ENCODE measurements at regions of chr17 and their contacts with region 1.

Region 1: GRCh38 chr17:77096570-77097214 is 44.1 kb upstream of the SEC14L1 start:
- DNase-seq: peak in 3 of 5 donors; percentile 33 to 51 (median 49)
- ATAC-seq: peak; percentile 14 to 76 (median 64)
- H3K4me3 ChIP-seq: peak overlapping the region in 2 of 12 donors; percentile 1 to 7
- H3K27ac ChIP-seq: peak overlapping the region; percentile 42 to 96 (median 75)
- H3K4me1 ChIP-seq: peaks cover 0 to 45% (median 36%) of the 10 kb centered on the region in 12 donors
- H3K27me3 ChIP-seq: no peaks in the 10 kb centered on the region
- CTCF ChIP-seq: peak; percentile 54 to 86 (median 78)
- POLR2A ChIP-seq: no peak

Region 2: GRCh38 chr17:77127735-77128361 is 31.2 kb after region 1 on chr17:
- intact Hi-C with region 1: loop called in 1 of 10 experiments (anchors 2 kb)
- DNase-seq: peak; percentile 80 to 86 (median 82)
- ATAC-seq: peak; percentile 65 to 83 (median 78)
- H3K4me3 ChIP-seq: peak overlapping the region in 9 of 12 donors; percentile 16 to 45 (median 39)
- H3K27ac ChIP-seq: peak overlapping the region; percentile 76 to 96 (median 87)
- H3K4me1 ChIP-seq: peaks cover 0 to 88% (median 40%) of the 10 kb centered on the region in 12 donors
- H3K27me3 ChIP-seq: no peaks in the 10 kb centered on the region
- CTCF ChIP-seq: no peak
- POLR2A ChIP-seq: peak in 1 of 2 donors; percentile 84

Region 3: DNA sequence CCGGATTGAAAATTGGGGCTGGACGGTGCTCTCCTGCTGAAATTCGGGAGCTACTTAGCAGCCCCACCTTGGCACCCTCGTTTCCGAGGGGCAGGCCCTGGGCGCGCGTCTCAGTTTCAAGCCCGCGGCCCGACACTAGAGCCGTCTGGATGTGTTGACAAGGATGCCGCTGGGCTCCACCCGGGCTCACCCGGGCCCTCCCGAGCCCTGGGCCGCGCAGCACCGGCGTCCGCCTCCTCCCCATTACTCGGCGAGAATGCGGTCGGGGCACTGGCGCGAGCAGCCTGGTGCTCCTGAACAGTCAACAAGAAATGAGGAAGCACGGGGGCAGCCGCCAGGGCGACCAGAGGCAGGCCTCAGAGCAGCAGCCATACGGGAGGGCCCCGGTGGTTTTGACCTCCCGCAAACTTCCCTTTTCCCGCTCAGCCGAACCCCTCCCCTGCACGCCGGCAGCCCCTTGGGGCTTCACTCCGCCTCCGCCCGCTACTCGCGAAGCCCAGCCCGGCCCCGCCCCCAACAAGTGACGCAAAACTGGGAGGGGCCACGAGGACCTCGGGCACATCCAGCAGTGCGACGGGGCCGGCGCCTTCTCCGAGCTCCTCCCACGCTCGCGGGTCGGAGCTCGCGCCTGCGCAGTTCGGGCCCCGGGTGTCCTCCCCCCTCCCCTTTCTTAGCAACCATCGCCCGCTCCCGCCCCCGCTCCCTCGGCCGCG is 43.6 kb after region 1 on chr17:
- intact Hi-C with region 1: loop called (anchors 2 to 10 kb)
- DNase-seq: peak; percentile 99 to 100 (median 100)
- ATAC-seq: peak; percentile 98
- H3K4me3 ChIP-seq: peak overlapping the region; percentile 12 to 95 (median 76)
- H3K27ac ChIP-seq: peak overlapping the region; percentile 80 to 98 (median 94)
- H3K4me1 ChIP-seq: peaks cover 0 to 54% (median 11%) of the 10 kb centered on the region in 12 donors
- H3K27me3 ChIP-seq: no peaks in the 10 kb centered on the region
- CTCF ChIP-seq: peak in 1 of 12 donors; percentile 27
- POLR2A ChIP-seq: peak; percentile 86 to 97

Region 4: DNA sequence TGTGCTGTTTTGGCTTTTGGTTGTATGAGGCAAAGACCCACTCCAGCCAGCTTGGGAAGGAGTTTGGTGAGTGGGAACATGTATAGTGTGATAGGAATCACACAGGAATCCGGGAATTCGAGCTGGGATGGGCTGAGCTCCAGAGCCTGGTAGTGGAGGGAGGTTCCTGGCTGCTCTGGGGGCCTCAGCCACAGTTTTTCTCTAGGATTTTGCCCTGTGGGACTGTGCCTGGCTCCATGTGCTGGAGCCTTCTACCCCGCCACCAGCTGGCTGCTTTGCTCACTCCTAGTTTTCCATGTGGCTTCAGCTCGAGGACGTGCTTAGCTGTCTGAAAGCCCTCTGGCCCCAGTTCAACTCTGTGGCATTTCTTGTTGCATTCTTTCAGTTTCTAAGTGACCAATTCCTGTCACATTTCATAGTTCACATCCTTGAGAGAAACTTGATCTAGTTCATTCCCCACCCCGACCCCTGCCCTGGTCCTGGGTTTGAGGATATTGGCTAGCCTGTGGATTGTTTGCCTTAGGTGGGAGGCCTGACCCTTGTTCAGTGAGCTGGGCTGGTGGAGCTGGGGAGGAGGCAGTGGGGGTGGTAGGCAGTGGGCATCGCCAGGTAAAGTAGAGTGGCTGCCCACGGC is 49.0 kb after region 1 on chr17:
- intact Hi-C with region 1: loop called (anchors 2 to 10 kb)
- DNase-seq: peak; percentile 68 to 78 (median 72)
- ATAC-seq: peak; percentile 32 to 68 (median 55)
- H3K4me3 ChIP-seq: peak overlapping the region in 10 of 12 donors; percentile 10 to 95 (median 71)
- H3K27ac ChIP-seq: peak overlapping the region; percentile 31 to 98 (median 88)
- H3K4me1 ChIP-seq: peaks cover 3 to 80% (median 38%) of the 10 kb centered on the region in 12 donors
- H3K27me3 ChIP-seq: no peaks in the 10 kb centered on the region
- CTCF ChIP-seq: peak in 9 of 12 donors; percentile 17 to 54 (median 26)
- POLR2A ChIP-seq: no peak

Region 5: GRCh38 chr17:77208217-77208808 is 111.6 kb after region 1 on chr17:
- intact Hi-C with region 1: loop called in 9 of 10 experiments (anchors 2 to 10 kb)
- DNase-seq: peak in 4 of 5 donors; percentile 56 to 63 (median 58)
- ATAC-seq: peak; percentile 34 to 82 (median 72)
- H3K4me3 ChIP-seq: no peak overlapping the region
- H3K27ac ChIP-seq: peak overlapping the region; percentile 21 to 72 (median 55)
- H3K4me1 ChIP-seq: peaks cover 4 to 70% (median 35%) of the 10 kb centered on the region in 12 donors
- H3K27me3 ChIP-seq: no peaks in the 10 kb centered on the region
- CTCF ChIP-seq: peak in 10 of 12 donors; percentile 17 to 60 (median 35)
- POLR2A ChIP-seq: no peak

Region 6: DNA sequence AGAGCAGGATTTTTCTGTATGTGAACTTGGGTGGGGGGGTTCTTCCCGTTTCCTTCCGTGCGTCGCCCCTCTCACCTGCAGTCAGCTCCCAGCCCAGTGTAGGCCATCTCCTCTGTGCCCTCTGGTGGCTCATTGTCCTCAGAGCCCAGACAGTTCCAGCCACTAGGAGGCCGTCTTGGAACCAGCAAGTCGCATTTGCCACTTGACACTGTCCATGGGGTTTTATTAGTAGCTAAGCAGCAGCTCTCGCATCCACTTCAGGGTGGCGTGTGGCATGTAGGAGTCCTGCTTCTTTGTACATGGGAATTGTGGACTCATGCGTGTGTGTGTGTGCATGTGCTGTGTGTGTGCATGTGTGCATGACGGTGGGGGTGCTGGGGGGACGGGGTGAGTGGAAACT is 118.1 kb after region 1 on chr17:
- intact Hi-C with region 1: loop called in 9 of 10 experiments (anchors 2 to 10 kb)
- DNase-seq: peak in 3 of 5 donors; percentile 57 to 69 (median 58)
- ATAC-seq: peak in 3 of 4 donors; percentile 69 to 75 (median 72)
- H3K4me3 ChIP-seq: no peak overlapping the region
- H3K27ac ChIP-seq: peak overlapping the region in 1 of 12 donors; percentile 23
- H3K4me1 ChIP-seq: peaks cover 0 to 44% (median 11%) of the 10 kb centered on the region in 12 donors
- H3K27me3 ChIP-seq: no peaks in the 10 kb centered on the region
- CTCF ChIP-seq: peak; percentile 30 to 67 (median 48)
- POLR2A ChIP-seq: no peak

Region 7: DNA sequence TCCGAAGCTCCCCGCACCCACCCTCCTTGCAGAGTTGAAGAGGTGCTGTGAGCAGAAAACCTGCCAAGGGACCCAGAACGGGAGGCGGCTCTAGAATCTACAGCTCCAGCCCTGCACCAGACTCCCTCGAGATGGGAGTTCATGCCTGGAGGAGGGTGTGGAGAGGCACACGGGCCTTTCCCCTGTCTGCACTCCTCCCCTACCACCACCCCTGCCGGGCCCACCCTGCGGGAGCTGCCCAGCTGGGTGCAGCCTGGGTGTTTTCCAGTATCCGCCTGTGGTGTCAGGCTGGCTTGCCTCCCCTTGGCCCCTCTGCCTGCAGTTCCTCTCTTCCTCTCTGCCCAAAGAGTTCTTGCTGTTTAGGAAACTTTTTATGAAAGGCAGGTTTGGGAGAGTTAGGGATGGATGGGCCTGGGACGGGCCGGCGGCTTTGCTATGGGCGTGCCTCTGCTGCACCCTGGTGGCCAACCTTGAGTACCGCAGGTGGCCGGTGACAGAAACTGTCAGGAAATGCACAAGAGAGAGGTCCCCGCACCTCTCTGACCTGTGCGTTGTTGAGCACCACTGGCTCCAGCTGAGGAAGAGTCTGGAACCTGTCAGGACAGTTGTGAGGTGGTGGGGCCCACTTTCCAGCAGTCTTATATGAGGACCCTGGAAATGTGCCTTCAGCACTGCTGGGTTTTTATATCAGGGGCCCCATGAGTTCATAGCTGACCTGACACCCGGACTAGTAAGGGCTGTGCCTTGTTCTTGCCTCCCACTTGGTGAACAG is 398.2 kb after region 1 on chr17:
- intact Hi-C with region 1: loop called in 1 of 10 experiments (anchors 10 kb)
- DNase-seq: peak; percentile 72 to 89 (median 78)
- ATAC-seq: peak; percentile 36 to 73 (median 70)
- H3K4me3 ChIP-seq: no peak overlapping the region
- H3K27ac ChIP-seq: peak overlapping the region in 2 of 12 donors; percentile 15 to 76
- H3K4me1 ChIP-seq: peaks cover 0 to 32% (median 18%) of the 10 kb centered on the region in 12 donors
- H3K27me3 ChIP-seq: no peaks in the 10 kb centered on the region
- CTCF ChIP-seq: peak; percentile 97 to 100 (median 98)
- POLR2A ChIP-seq: no peak

Measured in heart left ventricle (tissue), 16 donors.